Posterior vena cava (tissue), 2 donors: ENCODE measurements at regions of chr10 and their contacts with region 1.

Region 1: GRCh38 chr10:4450956-4451908 is 374.8 kb upstream of the AKR1E2 start:
- DNase-seq: no peak

Region 2: GRCh38 chr10:4470231-4470835 is 19.1 kb after region 1 on chr10:
- intact Hi-C with region 1: loop called in 1 of 2 experiments (anchors 1 kb)
- DNase-seq: no peak